SK-MEL-5 (cell line): ENCODE measurements at regions of chr14 and their contacts with region 1.

Region 1: GRCh38 chr14:103928011-103928890 is at the start of gene TDRD9:
- DNase-seq: no peak
- total RNA-seq, gene TDRD9: not detected in 2 replicates

Region 2: GRCh38 chr14:103808403-103809001 is 119.7 kb before region 1 on chr14:
- in situ Hi-C with region 1: loop called (anchors 25 kb)
- DNase-seq: peak; percentile 87

Region 3: GRCh38 chr14:104048758-104049507 is 120.7 kb after region 1 on chr14:
- in situ Hi-C with region 1: loop called (anchors 25 kb)
- DNase-seq: no peak

Region 4: DNA sequence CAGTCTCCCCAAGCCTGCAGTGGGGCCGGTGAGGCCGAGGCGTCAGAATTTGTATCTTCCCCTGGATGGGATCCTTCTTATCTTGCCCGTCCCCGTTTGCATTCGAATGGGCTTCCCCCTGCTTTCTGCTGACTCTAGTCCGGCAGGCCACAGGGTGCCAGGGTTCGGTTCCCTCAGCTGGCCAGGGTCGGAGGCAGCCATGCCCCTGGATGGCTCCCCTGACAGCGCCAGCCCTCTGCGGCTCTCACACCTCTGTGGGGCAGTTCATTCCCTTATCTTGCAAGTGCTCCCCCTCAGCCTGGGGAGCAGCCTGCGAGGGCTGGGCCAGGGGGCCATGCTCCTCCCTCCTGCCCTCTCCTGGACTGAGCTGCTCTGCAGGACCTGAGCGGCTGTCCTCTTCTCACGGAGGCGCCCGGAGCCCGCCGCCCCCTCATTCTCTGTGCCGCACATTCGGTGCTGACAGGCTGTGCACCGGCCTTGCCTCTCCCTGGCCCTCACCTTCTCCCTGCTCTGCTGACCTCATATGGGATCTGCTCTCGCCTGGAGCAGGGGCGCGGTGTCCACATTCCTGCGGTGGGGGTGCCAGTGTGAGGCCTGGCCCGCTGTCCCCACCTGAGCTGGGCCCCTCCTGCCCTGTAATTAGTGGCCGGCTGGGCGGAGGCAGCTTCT is 242.9 kb after region 1 on chr14:
- in situ Hi-C with region 1: no loop called
- DNase-seq: no peak

Region 5: GRCh38 chr14:104244221-104244987 is 316.2 kb after region 1 on chr14:
- in situ Hi-C with region 1: no loop called
- DNase-seq: no peak